ENCODE measurements at regions of chr15 and their contacts with region 1.

Region 1: GRCh38 chr15:52103217-52104207 is 9.1 kb downstream of the BCL2L10 start:
- DNase-seq: peak; percentile 79 to 84
- ATAC-seq: peak; percentile 92 to 97
- H3K4me3 ChIP-seq: no peak overlapping the region
- H3K27ac ChIP-seq: peak overlapping the region in 1 of 2 experiments; percentile 57
- H3K4me1 ChIP-seq: peaks cover 27% of the 10 kb centered on the region
- CTCF ChIP-seq: no peak
- EP300 ChIP-seq: no peak
- POLR2A ChIP-seq: no peak
- RAD21 ChIP-seq: no peak

Region 2: DNA sequence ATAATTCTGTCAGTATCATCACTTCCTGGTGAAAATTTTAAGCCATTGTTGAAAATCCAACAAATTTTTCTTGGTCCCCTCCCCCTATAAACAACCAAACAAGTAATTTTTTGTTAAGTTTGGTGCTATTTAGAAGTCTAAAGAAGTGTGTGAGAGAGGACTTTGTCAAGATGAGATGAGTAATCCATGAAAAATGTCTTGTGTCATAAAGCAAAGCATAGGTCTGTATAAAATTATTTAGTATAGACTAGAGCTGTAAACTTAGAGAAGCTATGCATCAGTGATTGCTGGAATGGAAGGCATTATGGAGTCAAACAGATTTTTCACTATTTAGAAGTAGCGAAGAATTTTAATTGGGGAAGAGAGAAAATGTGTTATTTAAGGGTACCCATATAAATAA is 53.1 kb before region 1 on chr15:
- CTCF ChIA-PET with region 1: no interaction called
- POLR2A ChIA-PET with region 1: no interaction called
- DNase-seq: peak in 1 of 2 experiments; percentile 23
- ATAC-seq: peak; percentile 46 to 58; a peak in 3 of 6 replicates
- H3K4me3 ChIP-seq: no peak overlapping the region
- H3K27ac ChIP-seq: no peak overlapping the region
- H3K4me1 ChIP-seq: peaks cover 32% of the 10 kb centered on the region
- CTCF ChIP-seq: no peak
- EP300 ChIP-seq: no peak
- POLR2A ChIP-seq: no peak
- RAD21 ChIP-seq: no peak

Region 3: DNA sequence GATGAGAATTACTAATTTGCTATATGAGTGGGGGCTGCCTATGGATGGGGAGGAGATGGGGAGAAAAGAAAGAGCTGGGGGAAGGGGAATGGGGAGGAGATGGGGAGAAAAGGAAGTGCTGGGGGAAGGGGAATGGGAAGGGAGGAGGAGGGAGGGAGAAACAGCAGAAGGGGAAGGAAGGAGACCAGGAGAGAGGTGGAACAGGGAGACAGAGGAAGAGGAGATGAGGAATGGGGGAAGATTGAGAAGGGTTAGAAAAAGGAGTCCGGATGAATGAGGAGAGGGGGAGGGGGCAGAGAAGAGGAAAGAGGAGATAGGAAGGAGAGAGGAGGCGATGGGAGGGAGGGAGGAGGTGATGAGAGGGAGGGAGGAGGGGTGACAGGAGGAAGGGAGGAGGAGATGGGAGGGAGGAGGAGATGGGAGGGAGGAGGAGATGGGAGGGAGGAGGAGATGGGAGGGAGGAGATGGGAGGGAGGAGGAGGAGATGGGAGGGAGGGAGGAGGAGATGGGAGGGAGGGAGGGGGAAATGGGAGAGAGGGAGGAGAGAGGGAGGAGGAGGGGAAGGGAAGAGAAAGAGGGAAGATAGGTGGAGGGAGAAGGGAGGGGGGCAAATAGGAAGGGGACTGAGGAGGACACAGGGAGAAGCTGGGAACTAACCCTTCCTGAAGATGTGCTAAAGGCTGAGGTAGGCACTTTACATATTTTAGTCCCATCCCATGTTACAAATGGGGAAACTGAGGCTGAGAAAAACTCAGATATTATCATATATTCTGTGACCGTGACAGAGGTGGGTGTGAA is 15.6 kb after region 1 on chr15:
- CTCF ChIA-PET with region 1: interaction called, 6 read pairs
- POLR2A ChIA-PET with region 1: interaction called, 10 read pairs
- DNase-seq: no peak
- ATAC-seq: no peak
- H3K4me3 ChIP-seq: no peak overlapping the region
- H3K27ac ChIP-seq: peak overlapping the region in 1 of 2 experiments; percentile 29; a peak in 1 of 6 replicates
- H3K4me1 ChIP-seq: peaks cover 11% of the 10 kb centered on the region
- CTCF ChIP-seq: no peak
- EP300 ChIP-seq: no peak
- POLR2A ChIP-seq: no peak
- RAD21 ChIP-seq: no peak

Measured in A549 (cell line).